MCF 10A (cell line): ENCODE measurements at regions of chr5 and their contacts with region 1.

Region 1: DNA sequence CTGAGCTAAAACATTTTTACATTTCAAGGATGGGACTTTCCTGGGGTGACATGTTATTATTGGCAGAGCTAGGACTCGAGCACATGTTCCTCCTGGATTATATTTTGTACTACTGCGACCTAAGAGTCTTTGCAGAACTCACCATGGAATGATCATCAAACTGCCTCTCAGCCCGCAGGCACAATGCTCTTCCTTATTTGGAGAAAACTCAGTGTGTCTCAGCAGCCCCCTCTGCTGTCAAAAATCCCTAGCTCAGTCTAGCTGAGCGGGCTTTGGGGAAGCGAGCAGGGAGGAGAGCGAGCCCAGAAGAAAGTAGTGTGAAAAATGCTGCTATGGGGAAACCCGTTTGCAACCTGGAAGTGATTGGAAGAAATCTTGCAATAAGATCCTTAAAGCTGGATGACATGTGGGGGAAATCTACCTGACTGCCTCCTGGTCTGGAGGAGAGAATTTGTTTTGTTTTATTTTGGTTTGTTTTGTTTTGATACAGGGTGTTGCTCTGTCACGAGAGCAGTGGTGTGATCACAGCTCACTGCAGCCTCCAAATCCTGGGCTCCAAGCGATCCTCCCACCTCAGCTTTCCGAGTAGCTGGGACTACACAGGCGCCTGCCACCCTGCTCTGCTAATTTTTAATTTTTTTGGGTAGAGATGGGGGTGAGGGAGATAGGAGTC is 89.9 kb upstream of the CLINT1 start:
- DNase-seq: peak; percentile 98
- H3K4me3 Mint-ChIP-seq: peak overlapping the region; percentile 26
- H3K27ac Mint-ChIP-seq: peak overlapping the region; percentile 32
- H3K4me1 Mint-ChIP-seq: peaks cover 8% of the 10 kb centered on the region
- H3K27me3 Mint-ChIP-seq: no peaks in the 10 kb centered on the region
- CTCF ChIP-seq: peak; percentile 91

Region 2: DNA sequence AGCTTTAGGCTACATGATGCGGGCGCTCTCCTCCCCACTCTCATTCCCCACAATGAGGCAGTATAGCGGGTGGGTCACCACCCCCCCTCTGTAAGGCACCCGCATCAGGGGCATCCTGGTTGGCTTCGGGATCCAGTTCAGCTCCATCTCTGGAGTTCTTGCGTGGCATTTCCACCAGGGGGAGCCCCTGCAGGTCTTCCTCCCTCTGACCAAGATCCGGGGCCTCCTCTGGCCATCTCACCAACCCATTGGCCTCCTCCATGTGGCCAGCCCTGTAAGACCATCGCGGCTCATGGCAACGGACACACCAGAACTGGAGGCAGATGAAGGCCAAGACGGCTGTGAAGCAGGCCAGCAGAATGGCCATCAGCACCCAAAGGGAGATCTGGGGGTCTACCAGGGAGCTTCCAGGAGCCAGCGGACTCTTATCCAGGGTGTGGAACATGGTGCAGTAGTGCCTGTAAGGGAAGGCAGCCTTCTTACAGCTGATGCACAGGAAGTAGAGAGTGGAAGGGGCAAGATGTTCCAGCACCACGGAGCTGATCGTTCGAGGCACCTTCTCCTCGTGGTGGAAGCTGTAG is 606.0 kb before region 1 on chr5:
- CTCF ChIA-PET with region 1: no interaction called
- POLR2A ChIA-PET with region 1: no interaction called
- intact Hi-C with region 1: no loop called
- DNase-seq: peak; percentile 66
- H3K4me3 Mint-ChIP-seq: no peak overlapping the region
- H3K27ac Mint-ChIP-seq: no peak overlapping the region
- H3K4me1 Mint-ChIP-seq: no peaks in the 10 kb centered on the region
- H3K27me3 Mint-ChIP-seq: no peaks in the 10 kb centered on the region
- CTCF ChIP-seq: peak; percentile 82

Region 3: GRCh38 chr5:157563373-157563928 is 385.4 kb before region 1 on chr5:
- CTCF ChIA-PET with region 1: no interaction called
- POLR2A ChIA-PET with region 1: no interaction called
- intact Hi-C with region 1: no loop called
- DNase-seq: peak; percentile 79
- H3K4me3 Mint-ChIP-seq: no peak overlapping the region
- H3K27ac Mint-ChIP-seq: no peak overlapping the region
- H3K4me1 Mint-ChIP-seq: peaks cover 13% of the 10 kb centered on the region
- H3K27me3 Mint-ChIP-seq: no peaks in the 10 kb centered on the region
- CTCF ChIP-seq: no peak

Region 4: GRCh38 chr5:157761690-157762621 is 186.9 kb before region 1 on chr5:
- CTCF ChIA-PET with region 1: interaction called, 22 read pairs
- POLR2A ChIA-PET with region 1: no interaction called
- intact Hi-C with region 1: loop called (anchors 1 kb)
- DNase-seq: peak; percentile 79
- H3K4me3 Mint-ChIP-seq: no peak overlapping the region
- H3K27ac Mint-ChIP-seq: no peak overlapping the region
- H3K4me1 Mint-ChIP-seq: peaks cover 1% of the 10 kb centered on the region
- H3K27me3 Mint-ChIP-seq: no peaks in the 10 kb centered on the region
- CTCF ChIP-seq: peak; percentile 91

Region 5: GRCh38 chr5:157820593-157821252 is 128.2 kb before region 1 on chr5:
- CTCF ChIA-PET with region 1: interaction called, 101 read pairs
- POLR2A ChIA-PET with region 1: interaction called, 7 read pairs
- intact Hi-C with region 1: loop called (anchors 1 kb)
- DNase-seq: peak; percentile 68
- H3K4me3 Mint-ChIP-seq: no peak overlapping the region
- H3K27ac Mint-ChIP-seq: peak overlapping the region; percentile 61
- H3K4me1 Mint-ChIP-seq: peaks cover 21% of the 10 kb centered on the region
- H3K27me3 Mint-ChIP-seq: no peaks in the 10 kb centered on the region
- CTCF ChIP-seq: peak; percentile 68

Region 6: DNA sequence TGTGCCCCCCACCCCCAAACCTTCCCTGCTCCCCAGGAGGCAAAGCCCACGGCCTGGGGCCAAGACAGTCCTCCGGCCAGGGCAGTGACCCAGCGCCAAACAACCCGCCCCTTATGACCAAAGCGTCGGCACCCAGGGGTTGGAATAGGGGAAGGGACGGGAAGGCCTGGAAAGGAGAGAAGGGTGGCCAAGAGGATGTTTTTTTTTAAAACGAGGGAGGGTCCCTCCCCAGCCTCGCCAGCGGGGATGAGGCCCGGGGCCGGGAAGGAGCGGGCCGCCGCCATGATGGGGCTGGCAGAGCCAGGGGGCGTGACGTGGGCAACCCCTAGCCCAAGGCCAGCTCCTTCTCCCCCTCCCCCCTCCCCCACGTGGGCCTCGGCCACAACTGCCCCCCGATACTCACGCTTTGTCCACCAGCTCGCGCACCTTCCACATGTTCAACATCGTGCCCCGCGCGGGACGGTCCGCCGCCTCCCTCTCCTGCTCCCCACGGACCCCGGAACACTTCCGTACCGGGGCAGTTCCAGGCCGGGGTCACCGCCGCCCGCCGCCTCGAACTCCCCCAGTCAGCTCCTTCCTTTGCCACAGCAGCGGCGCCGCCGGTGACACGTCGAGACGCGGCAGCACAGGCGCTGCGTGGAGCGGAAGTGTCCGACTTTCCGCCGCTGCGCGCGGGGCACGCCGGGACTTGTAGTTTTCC is 90.2 kb before region 1 on chr5 and contains the start of gene CLINT1:
- CTCF ChIA-PET with region 1: interaction called, 130 read pairs
- POLR2A ChIA-PET with region 1: interaction called, 6 read pairs
- intact Hi-C with region 1: loop called (anchors 1 kb)
- DNase-seq: peak; percentile 92
- H3K4me3 Mint-ChIP-seq: peak within 1 kb of the TSS; percentile 96
- H3K27ac Mint-ChIP-seq: peak within 1 kb of the TSS; percentile 99
- H3K4me1 Mint-ChIP-seq: peaks cover 22% of the 10 kb centered on the region
- H3K27me3 Mint-ChIP-seq: no peaks in the 10 kb centered on the region
- CTCF ChIP-seq: no peak
- total RNA-seq, gene CLINT1: 170 and 176 TPM in 2 replicates

Region 7: DNA sequence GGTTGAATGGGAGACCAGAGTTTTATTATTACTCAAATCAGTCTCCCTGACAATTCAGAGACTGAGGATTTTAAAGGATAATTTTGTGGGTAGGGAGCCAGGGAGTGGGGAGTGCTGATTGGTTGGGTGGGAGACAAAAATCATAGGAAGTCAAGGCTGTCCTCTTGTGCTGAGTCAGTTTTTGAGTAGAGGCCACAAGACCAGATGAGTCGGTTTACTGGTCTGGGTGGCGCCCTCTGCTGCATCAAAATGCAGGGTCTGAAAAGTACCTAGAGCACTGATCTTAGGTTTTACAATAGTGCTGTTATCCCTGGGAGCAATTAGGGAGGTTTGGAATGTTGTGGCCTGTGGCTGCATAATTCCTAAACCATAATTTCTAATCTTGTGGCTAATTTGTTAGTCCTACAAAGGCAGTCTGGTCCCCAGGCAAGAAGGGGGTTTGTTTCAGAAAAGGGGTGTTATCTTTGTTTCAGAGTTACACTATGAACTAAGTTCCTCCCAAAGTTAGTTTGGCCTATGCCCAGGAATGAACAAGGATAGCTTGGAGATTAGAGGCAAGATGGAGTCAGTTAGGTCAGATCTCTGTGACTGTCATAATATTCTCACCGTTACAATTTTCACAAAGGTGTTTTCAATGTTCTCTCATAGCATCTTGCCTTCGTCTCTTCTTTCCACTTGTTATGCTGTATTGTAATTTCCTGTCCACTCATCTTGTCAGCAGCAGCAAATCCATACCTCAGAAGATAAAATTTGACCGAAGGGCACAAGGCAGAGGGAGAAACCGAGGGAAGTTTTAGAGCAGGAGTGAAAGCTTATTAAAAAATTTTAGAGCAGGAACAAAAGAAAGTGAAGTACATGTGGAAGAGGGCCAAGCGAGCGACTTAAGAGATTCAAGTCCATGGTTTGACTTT is 30.7 kb before region 1 on chr5:
- CTCF ChIA-PET with region 1: interaction called, 27 read pairs
- POLR2A ChIA-PET with region 1: interaction called, 5 read pairs
- intact Hi-C with region 1: loop called (anchors 2 kb)
- DNase-seq: peak; percentile 90
- H3K4me3 Mint-ChIP-seq: no peak overlapping the region
- H3K27ac Mint-ChIP-seq: peak overlapping the region; percentile 38
- H3K4me1 Mint-ChIP-seq: peaks cover 32% of the 10 kb centered on the region
- H3K27me3 Mint-ChIP-seq: no peaks in the 10 kb centered on the region
- CTCF ChIP-seq: peak; percentile 82

Region 8: GRCh38 chr5:157961828-157962590 is 13.1 kb after region 1 on chr5:
- CTCF ChIA-PET with region 1: interaction called, 22 read pairs
- POLR2A ChIA-PET with region 1: interaction called, 7 read pairs
- intact Hi-C with region 1: no loop called
- DNase-seq: no peak
- H3K4me3 Mint-ChIP-seq: no peak overlapping the region
- H3K27ac Mint-ChIP-seq: no peak overlapping the region
- H3K4me1 Mint-ChIP-seq: no peaks in the 10 kb centered on the region
- H3K27me3 Mint-ChIP-seq: no peaks in the 10 kb centered on the region
- CTCF ChIP-seq: no peak

Region 9: DNA sequence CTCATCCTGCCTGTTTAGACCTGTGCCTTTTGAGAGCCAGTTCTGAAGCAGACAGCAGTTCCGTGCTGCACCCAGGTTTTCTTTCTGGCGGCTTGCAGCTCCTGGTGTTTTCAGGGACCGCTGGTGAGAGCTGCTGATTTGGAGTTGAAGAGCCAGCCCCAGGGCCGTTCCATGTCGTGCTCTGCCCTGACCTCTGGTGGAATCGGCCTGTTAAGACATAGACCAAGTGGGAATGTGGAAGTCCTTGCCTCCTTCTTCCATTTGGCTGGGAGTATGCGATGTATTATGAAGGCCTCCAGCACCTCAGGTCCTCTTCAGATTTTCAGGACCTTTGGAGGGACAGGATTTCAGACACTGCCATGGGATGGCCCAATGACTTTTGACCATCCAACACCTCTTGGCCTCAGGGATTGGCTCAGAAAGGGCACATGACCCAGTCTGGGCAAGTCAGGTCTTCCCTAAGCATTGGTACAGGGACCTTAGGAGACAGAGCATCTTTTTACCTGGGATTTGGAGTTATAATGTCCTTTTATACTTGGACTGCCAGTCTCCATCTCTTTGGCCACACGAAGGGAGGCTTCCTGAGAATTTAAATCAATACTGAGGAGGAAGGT is 46.1 kb after region 1 on chr5:
- CTCF ChIA-PET with region 1: interaction called, 94 read pairs
- POLR2A ChIA-PET with region 1: no interaction called
- intact Hi-C with region 1: loop called (anchors 2 kb)
- DNase-seq: peak; percentile 84
- H3K4me3 Mint-ChIP-seq: no peak overlapping the region
- H3K27ac Mint-ChIP-seq: no peak overlapping the region
- H3K4me1 Mint-ChIP-seq: peaks cover 10% of the 10 kb centered on the region
- H3K27me3 Mint-ChIP-seq: no peaks in the 10 kb centered on the region
- CTCF ChIP-seq: peak; percentile 85

Region 10: DNA sequence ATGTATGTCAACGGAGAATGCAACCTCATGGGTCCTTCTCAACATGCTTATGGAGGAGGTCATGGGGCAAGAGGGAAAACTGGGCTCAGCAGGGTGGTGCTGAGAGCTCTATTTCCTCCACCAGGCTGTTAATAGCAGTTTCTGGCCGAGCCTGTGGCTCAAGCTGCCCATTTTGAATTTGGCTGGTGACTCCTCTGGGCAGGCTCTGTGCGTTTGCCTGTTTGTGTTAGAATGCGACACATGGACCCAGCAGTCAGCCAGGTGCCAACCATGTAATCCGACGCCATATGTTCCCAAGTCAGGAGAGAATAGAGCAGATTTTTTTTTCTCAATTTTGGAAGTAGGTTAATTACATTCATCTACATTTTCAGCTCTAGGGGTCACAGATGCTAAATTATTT is 297.8 kb after region 1 on chr5:
- CTCF ChIA-PET with region 1: no interaction called
- POLR2A ChIA-PET with region 1: no interaction called
- intact Hi-C with region 1: no loop called
- DNase-seq: no peak
- H3K4me3 Mint-ChIP-seq: no peak overlapping the region
- H3K27ac Mint-ChIP-seq: no peak overlapping the region
- H3K4me1 Mint-ChIP-seq: no peaks in the 10 kb centered on the region
- H3K27me3 Mint-ChIP-seq: peaks cover 44% of the 10 kb centered on the region
- CTCF ChIP-seq: no peak